Activated CD4-positive, alpha-beta T cell treated with anti-CD3 and anti-CD28 coated beads, Interleukin-2, amount 10 ng/mL, durations not matched to agents 7 days and 5 days (primary cell): ENCODE measurements at regions of chr17 and their contacts with region 1.

Region 1: GRCh38 chr17:76278952-76279741 is 14.0 kb downstream of the UBALD2 start:
- DNase-seq: peak; percentile 87
- H3K4me3 Mint-ChIP-seq: no peak overlapping the region
- H3K27ac Mint-ChIP-seq: no peak overlapping the region
- H3K4me1 Mint-ChIP-seq: peaks cover 28% of the 10 kb centered on the region
- H3K27me3 Mint-ChIP-seq: no peaks in the 10 kb centered on the region

Region 2: DNA sequence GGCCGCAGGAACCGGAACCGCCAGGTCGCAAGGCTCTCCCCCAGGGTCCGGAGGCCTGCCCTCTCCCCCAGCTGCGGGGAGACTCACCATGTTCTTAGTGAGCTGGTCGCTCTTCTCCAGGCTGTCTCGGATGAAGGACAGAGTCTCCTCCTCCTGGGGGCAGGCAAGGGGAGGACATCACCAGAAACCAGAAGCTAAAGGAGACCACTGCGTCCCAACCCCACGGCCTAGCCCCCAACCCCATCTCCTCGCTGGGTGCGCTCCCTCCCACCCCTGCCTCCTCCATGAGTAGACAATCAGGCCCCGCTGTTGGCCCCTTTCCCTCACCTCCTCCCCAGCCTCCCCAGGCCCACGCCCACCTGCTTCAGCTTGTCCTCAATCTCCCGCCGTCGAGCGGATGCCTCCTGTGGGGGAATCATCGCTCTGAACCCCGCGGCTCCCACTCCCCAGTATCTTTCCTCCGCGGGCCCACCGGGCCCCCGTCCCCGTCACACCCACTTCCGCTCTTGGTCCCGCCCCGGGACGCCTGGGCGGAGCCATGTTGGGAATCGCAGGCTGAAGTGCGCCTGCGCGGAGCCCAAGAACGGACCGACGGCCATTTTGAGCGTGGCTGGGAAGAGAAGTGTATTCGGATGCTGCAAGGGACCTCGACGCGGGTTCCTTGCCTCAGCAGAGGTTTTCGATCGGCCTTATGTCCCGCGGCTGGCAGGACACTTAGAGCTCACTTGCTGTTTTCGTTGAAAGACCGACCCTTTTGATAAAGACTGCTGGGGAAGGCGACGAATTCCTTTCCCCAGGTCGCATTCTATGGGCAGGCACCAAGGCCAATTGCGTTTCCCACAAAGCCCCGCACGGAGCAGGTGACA is 175.6 kb before region 1 on chr17 and contains the start of gene EXOC7:
- CTCF ChIA-PET with region 1: interaction called, 14 read pairs
- POLR2A ChIA-PET with region 1: no interaction called
- DNase-seq: peak; percentile 93
- H3K4me3 Mint-ChIP-seq: peak within 1 kb of the TSS; percentile 96
- H3K27ac Mint-ChIP-seq: peak within 1 kb of the TSS; percentile 96
- H3K4me1 Mint-ChIP-seq: peaks cover 32% of the 10 kb centered on the region
- H3K27me3 Mint-ChIP-seq: no peaks in the 10 kb centered on the region
- total RNA-seq, gene EXOC7: 140 to 147 TPM

Region 3: GRCh38 chr17:76132574-76133338 is 146.4 kb before region 1 on chr17:
- CTCF ChIA-PET with region 1: interaction called, 160 read pairs
- POLR2A ChIA-PET with region 1: no interaction called
- DNase-seq: no peak
- H3K4me3 Mint-ChIP-seq: no peak overlapping the region
- H3K27ac Mint-ChIP-seq: no peak overlapping the region
- H3K4me1 Mint-ChIP-seq: peaks cover 29% of the 10 kb centered on the region
- H3K27me3 Mint-ChIP-seq: no peaks in the 10 kb centered on the region

Region 4: GRCh38 chr17:76182016-76182764 is 97.0 kb before region 1 on chr17:
- CTCF ChIA-PET with region 1: interaction called, 21 read pairs
- POLR2A ChIA-PET with region 1: no interaction called
- DNase-seq: peak; percentile 96
- H3K4me3 Mint-ChIP-seq: peak overlapping the region; percentile 8
- H3K27ac Mint-ChIP-seq: peak overlapping the region; percentile 93
- H3K4me1 Mint-ChIP-seq: peaks cover 69% of the 10 kb centered on the region
- H3K27me3 Mint-ChIP-seq: no peaks in the 10 kb centered on the region

Region 5: DNA sequence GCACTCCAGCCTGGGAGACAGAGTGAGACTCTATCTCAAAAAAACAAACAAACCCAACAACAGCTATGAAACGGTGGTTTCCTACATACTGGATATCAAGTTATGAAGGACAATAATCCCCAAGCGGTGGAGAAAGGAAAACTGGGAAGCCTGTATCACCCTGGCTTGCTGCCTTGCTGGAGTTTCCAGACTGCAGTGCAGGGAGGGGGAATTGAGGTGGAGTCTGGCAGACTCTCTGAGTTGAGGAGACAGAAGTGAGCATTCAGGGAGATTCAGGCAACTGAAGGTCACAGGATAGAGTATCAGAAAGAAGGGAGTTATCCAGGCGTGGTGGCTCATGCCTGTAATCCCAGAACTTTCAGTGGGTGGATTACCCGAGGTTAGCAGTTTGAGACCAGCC is 17.0 kb after region 1 on chr17:
- CTCF ChIA-PET with region 1: interaction called, 12 read pairs
- POLR2A ChIA-PET with region 1: no interaction called
- DNase-seq: no peak
- H3K4me3 Mint-ChIP-seq: no peak overlapping the region
- H3K27ac Mint-ChIP-seq: no peak overlapping the region
- H3K4me1 Mint-ChIP-seq: no peaks in the 10 kb centered on the region
- H3K27me3 Mint-ChIP-seq: no peaks in the 10 kb centered on the region

Region 6: DNA sequence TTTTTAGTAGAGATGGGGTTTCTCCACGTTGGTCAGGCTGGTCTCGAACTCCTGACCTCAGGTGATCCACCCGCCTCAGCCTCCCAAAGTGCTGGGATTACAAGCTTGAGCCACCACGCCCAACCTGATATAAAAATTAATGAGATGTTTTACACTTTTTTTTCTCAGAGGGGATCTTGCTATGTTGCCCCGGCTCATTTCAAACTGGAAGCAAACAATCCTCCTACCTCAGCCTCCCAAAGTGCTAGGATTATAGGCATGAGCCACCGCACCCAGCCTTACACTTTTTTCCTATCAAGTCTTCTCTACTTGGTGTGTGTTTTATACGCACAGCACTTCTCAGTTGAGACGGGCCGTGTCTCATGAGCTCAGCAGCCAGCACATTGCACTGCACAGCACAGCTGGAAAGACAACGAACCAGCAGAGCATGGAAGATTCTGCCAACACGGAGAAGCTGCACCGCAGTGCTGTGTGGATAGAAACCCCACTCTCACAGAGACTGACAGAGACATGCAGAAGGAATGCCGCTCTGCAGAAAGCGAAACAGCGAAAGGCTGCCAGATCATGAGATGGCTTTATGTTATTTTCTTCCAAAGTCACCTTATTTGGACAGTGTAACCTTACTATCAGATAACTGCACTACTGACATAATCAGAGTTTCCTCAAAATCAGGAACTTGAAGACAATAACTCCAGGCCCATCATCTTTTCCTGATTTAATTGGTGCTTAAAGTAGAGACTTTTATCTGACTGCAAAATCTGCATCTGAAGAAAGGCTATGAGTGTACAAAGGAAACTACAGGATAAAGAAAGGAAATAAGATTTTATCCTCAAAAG is 35.5 kb after region 1 on chr17:
- CTCF ChIA-PET with region 1: no interaction called
- POLR2A ChIA-PET with region 1: no interaction called
- DNase-seq: no peak
- H3K4me3 Mint-ChIP-seq: no peak overlapping the region
- H3K27ac Mint-ChIP-seq: no peak overlapping the region
- H3K4me1 Mint-ChIP-seq: peaks cover 12% of the 10 kb centered on the region
- H3K27me3 Mint-ChIP-seq: no peaks in the 10 kb centered on the region